MCF 10A (cell line): ENCODE measurements at regions of chr4 and their contacts with region 1.

Region 1: GRCh38 chr4:164956766-164957643 is 20.5 kb downstream of the TRIM61 start:
- DNase-seq: peak; percentile 90
- H3K4me3 Mint-ChIP-seq: peak overlapping the region; percentile 98
- H3K27ac Mint-ChIP-seq: peak overlapping the region; percentile 95
- H3K4me1 Mint-ChIP-seq: peaks cover 32% of the 10 kb centered on the region
- H3K27me3 Mint-ChIP-seq: no peaks in the 10 kb centered on the region
- CTCF ChIP-seq: no peak

Region 2: DNA sequence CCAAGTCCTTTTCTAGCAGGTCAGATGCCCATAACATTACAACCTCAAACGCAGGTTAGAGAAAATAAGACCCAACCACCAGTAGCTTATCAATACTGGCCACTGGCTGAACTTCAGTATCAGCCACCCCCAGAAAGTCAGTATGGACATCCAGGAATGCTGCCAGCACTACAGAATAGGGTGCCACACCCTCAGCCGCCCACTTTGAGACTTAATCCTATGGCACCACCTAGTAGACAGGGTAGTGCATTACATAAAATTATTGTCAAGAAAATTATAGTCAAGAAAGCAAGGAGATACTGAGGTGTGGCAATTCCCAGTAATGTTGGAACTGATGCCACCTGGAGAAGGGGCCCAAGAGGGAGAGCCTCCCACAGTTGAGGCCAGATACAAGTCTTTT is 40.3 kb after region 1 on chr4:
- CTCF ChIA-PET with region 1: interaction called, 3 read pairs
- POLR2A ChIA-PET with region 1: interaction called, 3 read pairs
- intact Hi-C with region 1: loop called (anchors 5 kb)
- DNase-seq: peak; percentile 70
- H3K4me3 Mint-ChIP-seq: no peak overlapping the region
- H3K27ac Mint-ChIP-seq: no peak overlapping the region
- H3K4me1 Mint-ChIP-seq: no peaks in the 10 kb centered on the region
- H3K27me3 Mint-ChIP-seq: no peaks in the 10 kb centered on the region
- CTCF ChIP-seq: peak; percentile 44